GM10248 (cell line): ENCODE measurements at regions of chr5 and their contacts with region 1.

Region 1: DNA sequence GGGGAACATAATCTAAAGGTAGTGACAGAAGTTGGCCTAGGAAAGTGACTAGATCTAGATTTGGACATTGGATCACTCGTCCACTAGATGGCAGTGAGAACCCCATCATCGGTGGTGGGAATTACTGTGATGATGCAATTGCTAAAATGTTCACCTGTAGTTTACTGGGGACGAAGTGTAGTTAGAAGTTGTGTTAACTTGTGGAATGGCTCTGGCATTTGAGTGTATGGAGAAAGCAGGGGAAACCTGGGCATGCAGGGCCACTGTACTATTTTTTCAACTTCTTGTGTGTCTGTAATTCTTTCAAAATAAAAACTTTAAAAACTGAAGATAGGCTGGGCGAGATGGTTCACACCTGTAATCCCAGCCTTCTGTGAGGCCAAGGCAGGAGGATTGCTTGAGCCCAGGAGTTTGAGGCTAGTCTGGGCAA is 75.5 kb downstream of the PHAX start:
- DNase-seq: peak; percentile 86
- CTCF ChIP-seq: peak; percentile 73

Region 2: DNA sequence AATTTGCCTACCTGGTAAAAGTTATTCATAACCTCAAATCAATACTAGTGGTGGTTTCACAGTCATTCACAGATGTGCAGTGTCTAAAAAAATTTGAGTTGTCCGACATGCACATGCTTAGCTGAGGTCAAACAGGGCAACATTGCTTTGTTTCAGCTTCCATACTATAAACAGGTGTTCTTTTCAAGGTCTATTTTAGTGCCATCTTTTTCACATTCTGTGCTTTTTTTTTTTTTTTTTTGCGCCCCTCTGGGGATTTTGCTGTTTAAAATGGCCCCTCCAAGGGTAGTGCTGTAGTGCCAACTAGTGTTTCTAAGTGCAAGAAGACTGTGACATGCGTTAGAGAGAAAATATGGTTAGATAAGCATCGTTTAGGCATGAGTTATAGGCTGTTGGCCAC is 60.9 kb before region 1 on chr5:
- CTCF ChIA-PET with region 1: no interaction called
- POLR2A ChIA-PET with region 1: no interaction called
- DNase-seq: peak; percentile 47
- CTCF ChIP-seq: no peak

Region 3: DNA sequence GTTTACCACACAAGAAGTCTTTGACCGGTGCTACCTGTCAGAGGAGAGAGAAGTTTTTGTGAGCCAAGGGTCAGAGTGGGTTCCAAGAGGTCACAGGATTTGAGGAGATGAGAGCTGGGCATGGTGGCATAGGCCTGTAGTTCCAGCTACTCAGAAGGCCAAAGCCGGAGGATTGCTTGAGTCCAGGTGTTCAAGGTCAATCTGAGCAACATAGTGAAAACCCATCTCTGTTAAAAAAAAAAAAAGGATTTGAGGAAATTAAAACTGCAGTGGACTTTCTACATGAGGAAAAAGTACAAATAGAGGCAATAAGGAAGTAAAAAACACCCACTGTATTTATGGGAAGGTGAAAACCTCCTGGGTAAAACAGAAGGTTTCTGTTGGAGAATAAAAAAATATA is 11.6 kb before region 1 on chr5:
- CTCF ChIA-PET with region 1: interaction called, 13 read pairs
- POLR2A ChIA-PET with region 1: interaction called, 3 read pairs
- DNase-seq: no peak
- CTCF ChIP-seq: no peak

Region 4: GRCh38 chr5:126686451-126687126 is 10.4 kb after region 1 on chr5:
- CTCF ChIA-PET with region 1: interaction called, 46 read pairs
- POLR2A ChIA-PET with region 1: interaction called, 3 read pairs
- DNase-seq: no peak
- CTCF ChIP-seq: no peak

Region 5: DNA sequence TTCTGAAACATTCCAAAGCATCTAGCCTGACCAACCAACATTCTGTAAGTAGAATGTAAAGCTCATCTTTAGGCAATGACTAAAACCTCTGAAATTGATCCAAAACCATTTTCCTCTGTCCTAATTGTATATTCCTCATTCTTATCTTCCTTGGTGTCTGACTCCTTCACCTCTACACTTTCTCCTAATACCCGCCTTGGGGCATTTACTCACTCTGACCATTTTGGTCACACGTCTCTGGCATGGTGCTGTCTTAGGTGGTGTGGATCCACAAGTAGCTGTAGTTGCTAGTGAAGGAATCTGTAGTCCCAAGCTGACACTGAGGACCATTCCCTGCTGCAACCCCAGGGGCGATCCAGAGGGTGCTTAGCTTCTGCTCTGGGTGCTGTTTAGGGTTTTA is 59.9 kb after region 1 on chr5:
- CTCF ChIA-PET with region 1: interaction called, 10 read pairs
- POLR2A ChIA-PET with region 1: no interaction called
- DNase-seq: no peak
- CTCF ChIP-seq: no peak

Region 6: GRCh38 chr5:126776497-126777256 is 100.5 kb after region 1 on chr5 and contains the start of gene LMNB1:
- CTCF ChIA-PET with region 1: interaction called, 319 read pairs
- POLR2A ChIA-PET with region 1: interaction called, 11 read pairs
- DNase-seq: peak; percentile 93
- CTCF ChIP-seq: no peak

Region 7: DNA sequence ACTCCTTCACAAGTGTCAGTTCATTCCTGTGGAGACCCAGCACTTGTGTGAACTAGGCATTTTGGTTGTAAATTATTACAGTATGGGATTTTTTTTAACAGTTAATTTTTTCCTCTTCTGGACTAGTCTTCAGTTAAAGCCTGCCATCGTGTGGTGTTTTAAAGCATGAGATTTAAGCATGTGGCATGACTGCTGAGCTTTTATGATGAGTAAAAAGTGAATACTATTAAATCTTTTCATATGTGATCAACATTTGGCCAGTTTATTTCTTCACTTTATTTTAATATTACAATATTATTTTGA is 125.7 kb after region 1 on chr5:
- CTCF ChIA-PET with region 1: interaction called, 140 read pairs
- POLR2A ChIA-PET with region 1: no interaction called
- DNase-seq: peak; percentile 26
- CTCF ChIP-seq: peak; percentile 51

Region 8: GRCh38 chr5:126808521-126808988 is 132.3 kb after region 1 on chr5:
- CTCF ChIA-PET with region 1: interaction called, 140 read pairs
- POLR2A ChIA-PET with region 1: no interaction called
- DNase-seq: peak; percentile 47
- CTCF ChIP-seq: peak; percentile 35

Region 9: DNA sequence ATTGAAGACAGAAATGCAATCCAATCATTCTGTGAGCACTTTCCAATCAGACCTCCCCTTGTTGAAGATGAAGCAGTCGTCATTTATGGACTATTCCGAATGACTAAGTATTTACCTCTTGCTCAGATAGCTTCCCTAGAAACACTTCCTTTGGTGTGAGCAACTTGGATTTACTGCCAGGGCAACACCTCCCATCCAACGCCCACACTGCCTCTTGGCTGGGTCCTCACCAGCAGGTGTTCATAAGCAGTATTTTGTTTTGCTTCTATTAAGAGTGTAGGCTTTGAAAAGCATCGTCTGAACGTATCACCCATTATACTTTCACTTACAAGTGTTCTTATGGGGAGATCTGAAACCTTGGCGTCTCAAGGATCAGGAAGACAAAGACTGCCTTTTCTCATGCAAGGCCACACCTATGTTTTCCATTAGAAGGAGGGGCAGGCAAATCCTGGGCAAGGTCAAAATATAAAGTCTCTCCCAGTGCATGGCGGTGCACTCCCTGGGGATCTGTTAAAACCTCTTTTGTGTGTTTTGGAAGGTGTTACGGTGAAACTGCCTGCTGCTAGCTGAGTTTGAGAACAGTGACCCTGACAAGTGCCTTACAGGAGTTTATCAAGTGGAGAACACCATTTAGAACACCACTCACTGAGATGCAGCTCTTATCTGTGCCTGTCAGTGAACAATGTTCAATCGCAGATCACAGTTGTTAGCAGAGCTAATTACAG is 364.7 kb after region 1 on chr5:
- CTCF ChIA-PET with region 1: no interaction called
- POLR2A ChIA-PET with region 1: no interaction called
- DNase-seq: no peak
- CTCF ChIP-seq: no peak